Endothelial cell of umbilical vein (primary cell): ENCODE measurements at regions of chr5 and their contacts with region 1.

Region 1: GRCh38 chr5:128905571-128906110 is 59.6 kb upstream of the SLC27A6 start:
- DNase-seq: peak; percentile 68
- H3K4me3 ChIP-seq: no peak overlapping the region
- H3K27ac ChIP-seq: no peak overlapping the region
- H3K4me1 ChIP-seq: no peaks in the 10 kb centered on the region
- H3K27me3 ChIP-seq: no peaks in the 10 kb centered on the region
- CTCF ChIP-seq: peak; percentile 49 to 51
- POLR2A ChIP-seq: no peak

Region 2: GRCh38 chr5:128615578-128615977 is 290.1 kb before region 1 on chr5:
- CTCF ChIA-PET with region 1: no interaction called
- POLR2A ChIA-PET with region 1: no interaction called
- dilution Hi-C with region 1: no loop called
- intact Hi-C with region 1: no loop called
- DNase-seq: no peak
- H3K4me3 ChIP-seq: no peak overlapping the region
- H3K27ac ChIP-seq: no peak overlapping the region
- H3K4me1 ChIP-seq: no peaks in the 10 kb centered on the region
- H3K27me3 ChIP-seq: no peaks in the 10 kb centered on the region
- CTCF ChIP-seq: no peak
- POLR2A ChIP-seq: no peak

Region 3: DNA sequence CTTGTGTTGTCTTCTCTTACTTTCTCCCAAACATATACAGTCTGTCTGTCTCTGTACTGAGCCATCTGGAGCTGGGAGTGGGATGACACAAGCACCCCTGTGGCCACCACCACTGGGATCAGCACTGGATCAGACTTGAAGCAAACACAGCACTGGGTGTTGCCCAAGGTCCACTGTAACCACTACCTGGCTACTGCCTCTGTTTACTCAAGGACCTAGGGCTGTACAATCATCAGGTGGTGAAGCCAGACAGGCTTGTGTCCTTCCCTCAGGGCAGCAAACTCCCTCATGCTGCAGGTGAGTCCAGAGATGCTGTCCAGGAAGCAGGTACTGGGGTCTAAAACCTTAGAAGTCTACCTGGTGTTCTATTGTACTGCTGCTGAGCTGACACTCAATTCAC is 10.1 kb before region 1 on chr5:
- CTCF ChIA-PET with region 1: interaction called, 20 read pairs
- POLR2A ChIA-PET with region 1: no interaction called
- dilution Hi-C with region 1: no loop called
- intact Hi-C with region 1: no loop called
- DNase-seq: no peak
- H3K4me3 ChIP-seq: no peak overlapping the region
- H3K27ac ChIP-seq: peak overlapping the region; percentile 84
- H3K4me1 ChIP-seq: peaks cover 9% of the 10 kb centered on the region
- H3K27me3 ChIP-seq: no peaks in the 10 kb centered on the region
- CTCF ChIP-seq: no peak
- POLR2A ChIP-seq: no peak

Region 4: DNA sequence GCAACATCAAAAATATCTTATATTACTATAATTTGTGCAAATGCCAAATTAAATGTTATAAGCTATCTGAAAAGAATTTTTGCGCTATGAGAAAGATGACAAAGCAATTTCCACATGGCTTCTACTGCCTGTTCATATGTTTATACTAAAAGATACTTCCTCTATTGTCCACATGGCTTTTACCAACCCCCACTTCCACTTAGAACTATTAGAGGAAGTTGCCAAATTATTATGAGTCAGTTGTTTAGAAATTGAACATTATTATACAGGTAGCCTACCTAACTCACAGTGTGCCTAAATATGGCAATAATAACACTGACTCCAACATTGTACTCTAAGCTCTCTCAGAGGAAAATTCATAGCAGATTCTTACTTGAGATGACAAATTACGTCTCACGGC is 22.0 kb after region 1 on chr5:
- CTCF ChIA-PET with region 1: interaction called, 10 read pairs
- POLR2A ChIA-PET with region 1: no interaction called
- dilution Hi-C with region 1: no loop called
- intact Hi-C with region 1: no loop called
- DNase-seq: peak; percentile 53
- H3K4me3 ChIP-seq: no peak overlapping the region
- H3K27ac ChIP-seq: no peak overlapping the region
- H3K4me1 ChIP-seq: peaks cover 8% of the 10 kb centered on the region
- H3K27me3 ChIP-seq: no peaks in the 10 kb centered on the region
- CTCF ChIP-seq: no peak
- POLR2A ChIP-seq: no peak

Region 5: GRCh38 chr5:129125810-129126209 is 220.2 kb after region 1 on chr5:
- CTCF ChIA-PET with region 1: interaction called, 73 read pairs
- POLR2A ChIA-PET with region 1: no interaction called
- dilution Hi-C with region 1: no loop called
- intact Hi-C with region 1: loop called (anchors 1 kb)
- DNase-seq: no peak
- H3K4me3 ChIP-seq: no peak overlapping the region
- H3K27ac ChIP-seq: no peak overlapping the region
- H3K4me1 ChIP-seq: no peaks in the 10 kb centered on the region
- H3K27me3 ChIP-seq: no peaks in the 10 kb centered on the region
- CTCF ChIP-seq: no peak
- POLR2A ChIP-seq: no peak

Region 6: GRCh38 chr5:129271303-129271702 is 365.7 kb after region 1 on chr5:
- CTCF ChIA-PET with region 1: interaction called, 6 read pairs
- POLR2A ChIA-PET with region 1: no interaction called
- dilution Hi-C with region 1: no loop called
- intact Hi-C with region 1: loop called (anchors 5 kb)
- DNase-seq: peak; percentile 2
- H3K4me3 ChIP-seq: no peak overlapping the region
- H3K27ac ChIP-seq: no peak overlapping the region
- H3K4me1 ChIP-seq: no peaks in the 10 kb centered on the region
- H3K27me3 ChIP-seq: no peaks in the 10 kb centered on the region
- CTCF ChIP-seq: no peak
- POLR2A ChIP-seq: no peak

Region 7: DNA sequence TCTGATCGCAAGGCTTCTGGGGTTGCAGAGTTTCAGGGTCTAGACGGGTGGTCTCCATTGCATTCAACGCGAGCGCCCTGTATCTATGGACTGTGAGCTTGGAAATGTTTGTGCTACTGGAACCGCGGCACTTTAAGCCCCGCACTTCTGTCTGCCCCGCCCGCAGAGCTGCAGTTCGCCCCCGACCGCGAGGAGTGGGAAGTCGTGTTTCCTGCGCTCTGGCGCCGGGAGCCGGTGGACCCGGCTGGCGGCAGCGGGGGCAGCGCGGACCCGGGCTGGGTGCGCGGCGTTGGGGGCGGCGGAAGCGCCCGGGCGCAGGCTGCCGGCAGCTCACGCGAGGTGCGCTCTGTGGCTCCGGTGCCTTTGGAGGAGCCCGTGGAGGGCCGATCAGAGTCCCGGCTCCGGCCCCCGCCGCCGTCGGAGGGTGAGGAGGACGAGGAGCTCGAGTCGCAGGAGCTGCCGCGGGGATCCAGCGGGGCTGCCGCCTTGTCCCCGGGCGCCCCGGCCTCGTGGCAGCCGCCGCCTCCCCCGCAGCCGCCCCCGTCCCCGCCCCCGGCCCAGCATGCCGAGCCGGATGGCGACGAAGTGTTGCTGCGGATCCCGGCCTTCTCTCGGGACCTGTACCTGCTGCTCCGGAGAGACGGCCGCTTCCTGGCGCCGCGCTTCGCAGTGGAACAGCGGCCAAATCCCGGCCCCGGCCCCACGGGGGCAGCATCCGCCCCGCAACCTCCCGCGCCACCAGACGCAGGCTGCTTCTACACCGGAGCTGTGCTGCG is 555.5 kb after region 1 on chr5:
- CTCF ChIA-PET with region 1: interaction called, 6 read pairs
- POLR2A ChIA-PET with region 1: no interaction called
- dilution Hi-C with region 1: no loop called
- intact Hi-C with region 1: loop called (anchors 2 kb)
- DNase-seq: peak; percentile 10
- H3K4me3 ChIP-seq: peak overlapping the region; percentile 21 to 41 (median 22)
- H3K27ac ChIP-seq: no peak overlapping the region
- H3K4me1 ChIP-seq: peaks cover 10% of the 10 kb centered on the region
- H3K27me3 ChIP-seq: peaks cover 32 to 54% of the 10 kb centered on the region in 2 experiments
- CTCF ChIP-seq: peak; percentile 14 to 42
- POLR2A ChIP-seq: no peak